Heart left ventricle (tissue), 16 donors: ENCODE measurements at regions of chr10 and their contacts with region 1.

Region 1: GRCh38 chr10:79068562-79069324 is at the start of gene ZMIZ1:
- DNase-seq: peak; percentile 91 to 94 (median 92)
- ATAC-seq: peak; percentile 27 to 54 (median 43)
- H3K4me3 ChIP-seq: peak within 1 kb of the TSS; percentile 76 to 99 (median 92)
- H3K27ac ChIP-seq: peak within 1 kb of the TSS; percentile 95 to 100 (median 98)
- H3K4me1 ChIP-seq: peaks cover 10 to 48% (median 41%) of the 10 kb centered on the region in 12 donors
- H3K27me3 ChIP-seq: no peaks in the 10 kb centered on the region
- CTCF ChIP-seq: peak in 6 of 12 donors; percentile 6 to 50 (median 36)
- POLR2A ChIP-seq: peak; percentile 37 to 90
- total RNA-seq, gene ZMIZ1: 39.8 to 75.4 (median 50.5) TPM

Region 2: DNA sequence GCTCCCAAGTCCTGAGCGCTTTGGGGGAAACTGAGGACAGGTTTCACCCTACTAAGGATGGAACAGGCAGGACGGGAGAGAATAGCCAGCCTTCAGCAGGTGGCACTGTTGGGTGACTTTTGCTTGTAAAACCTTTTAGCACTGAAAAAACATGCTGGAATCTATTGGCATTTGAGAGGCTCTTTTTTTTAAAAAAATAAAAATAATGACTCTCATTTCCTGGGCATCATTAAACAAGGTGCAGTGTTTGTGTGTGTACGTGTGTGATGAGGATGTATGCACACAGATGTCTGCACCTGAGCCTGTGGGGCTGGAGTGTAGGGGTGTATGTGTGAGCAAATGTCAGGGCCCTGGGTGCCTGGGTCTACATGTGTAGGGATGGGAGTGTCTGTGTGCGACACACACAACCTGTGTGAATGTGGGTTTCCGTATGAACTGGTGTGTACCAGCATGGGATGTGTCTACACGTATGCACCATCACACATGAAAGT is 857.1 kb before region 1 on chr10:
- intact Hi-C with region 1: loop called in 4 of 10 experiments (anchors 5 to 10 kb)
- DNase-seq: peak in 1 of 5 donors; percentile 47
- ATAC-seq: peak in 3 of 4 donors; percentile 5 to 18 (median 9)
- H3K4me3 ChIP-seq: no peak overlapping the region
- H3K27ac ChIP-seq: peak overlapping the region in 5 of 12 donors; percentile 19 to 62 (median 52)
- H3K4me1 ChIP-seq: peaks cover 0 to 38% (median 19%) of the 10 kb centered on the region in 12 donors
- H3K27me3 ChIP-seq: no peaks in the 10 kb centered on the region
- CTCF ChIP-seq: peak in 11 of 12 donors; percentile 21 to 69 (median 55)
- POLR2A ChIP-seq: no peak

Region 3: DNA sequence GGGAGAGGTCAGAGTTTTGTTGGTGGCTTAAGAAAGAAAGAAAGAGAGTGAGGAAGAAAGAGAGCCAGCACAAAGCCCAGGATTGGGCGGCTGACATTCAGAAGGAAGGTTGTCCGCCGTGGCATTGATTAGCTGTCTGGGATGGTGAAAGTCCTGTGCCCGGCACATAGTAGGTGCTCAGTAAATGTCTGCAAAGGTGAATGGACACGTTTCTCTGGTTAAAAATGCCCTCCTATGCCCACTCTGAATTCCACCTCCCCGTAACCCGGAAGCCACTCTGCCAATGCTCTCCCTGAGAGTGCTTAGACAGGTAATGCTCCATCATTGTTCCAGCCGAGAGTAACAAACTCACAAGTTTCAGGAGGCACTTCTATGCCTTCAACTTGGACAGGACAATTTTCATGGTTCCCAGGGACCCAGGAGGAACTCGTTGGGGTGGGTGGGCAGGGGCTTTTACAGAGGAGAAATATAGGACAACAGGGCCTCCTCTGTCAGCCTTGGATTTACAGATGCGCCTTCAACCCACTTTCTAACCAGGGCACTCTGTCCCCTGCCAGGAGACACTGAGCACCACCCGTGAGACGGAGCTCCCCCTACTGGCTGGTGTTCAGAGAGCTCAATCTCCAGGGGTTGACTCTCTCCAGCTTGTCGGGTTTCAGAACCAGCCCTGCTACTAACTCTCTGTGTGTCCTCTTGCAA is 411.4 kb before region 1 on chr10:
- intact Hi-C with region 1: loop called in 1 of 10 experiments (anchors 10 kb)
- DNase-seq: peak; percentile 72 to 84 (median 76)
- ATAC-seq: peak; percentile 81 to 94 (median 92)
- H3K4me3 ChIP-seq: no peak overlapping the region
- H3K27ac ChIP-seq: peak overlapping the region in 1 of 12 donors; percentile 45
- H3K4me1 ChIP-seq: peaks cover 0 to 5% (median 0%) of the 10 kb centered on the region in 12 donors
- H3K27me3 ChIP-seq: no peaks in the 10 kb centered on the region
- CTCF ChIP-seq: peak; percentile 55 to 77 (median 66)
- POLR2A ChIP-seq: no peak

Region 4: DNA sequence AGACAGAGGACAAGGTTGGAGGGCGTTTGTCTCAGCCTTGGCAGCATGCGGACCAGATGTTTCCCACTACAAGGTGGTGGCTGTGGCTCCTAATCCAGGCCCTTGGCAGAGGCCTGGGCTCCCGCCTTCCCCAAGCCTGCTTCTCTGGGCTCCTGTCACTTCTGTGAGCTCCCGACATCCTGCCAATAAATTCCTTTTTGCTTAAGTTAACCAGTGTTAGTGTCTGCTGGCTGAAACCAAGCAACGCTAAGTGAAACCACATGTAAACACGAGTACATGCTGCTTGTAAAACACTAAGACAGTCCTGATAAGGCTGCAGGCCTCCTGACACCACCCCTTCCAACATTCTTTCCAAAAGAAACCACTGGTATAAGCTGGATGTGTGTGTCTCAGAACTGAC is 263.6 kb before region 1 on chr10:
- intact Hi-C with region 1: loop called in 3 of 10 experiments (anchors 2 to 10 kb)
- DNase-seq: peak; percentile 67 to 88 (median 82)
- ATAC-seq: peak; percentile 90 to 93 (median 92)
- H3K4me3 ChIP-seq: no peak overlapping the region
- H3K27ac ChIP-seq: peak overlapping the region; percentile 57 to 87 (median 79)
- H3K4me1 ChIP-seq: peaks cover 0 to 68% (median 43%) of the 10 kb centered on the region in 12 donors
- H3K27me3 ChIP-seq: no peaks in the 10 kb centered on the region
- CTCF ChIP-seq: no peak
- POLR2A ChIP-seq: no peak

Region 5: GRCh38 chr10:78991187-78991586 is 77.6 kb before region 1 on chr10:
- intact Hi-C with region 1: no loop called
- DNase-seq: no peak
- ATAC-seq: no peak
- H3K4me3 ChIP-seq: no peak overlapping the region
- H3K27ac ChIP-seq: no peak overlapping the region
- H3K4me1 ChIP-seq: no peaks in the 10 kb centered on the region
- H3K27me3 ChIP-seq: no peaks in the 10 kb centered on the region
- CTCF ChIP-seq: no peak
- POLR2A ChIP-seq: no peak

Region 6: GRCh38 chr10:79105150-79105739 is 36.5 kb after region 1 on chr10:
- intact Hi-C with region 1: loop called in 3 of 10 experiments (anchors 5 kb)
- DNase-seq: no peak
- ATAC-seq: no peak
- H3K4me3 ChIP-seq: no peak overlapping the region
- H3K27ac ChIP-seq: peak overlapping the region in 8 of 12 donors; percentile 2 to 94 (median 51)
- H3K4me1 ChIP-seq: peaks cover 33 to 99% (median 83%) of the 10 kb centered on the region in 12 donors
- H3K27me3 ChIP-seq: no peaks in the 10 kb centered on the region
- CTCF ChIP-seq: peak in 3 of 12 donors; percentile 10 to 31 (median 13)
- POLR2A ChIP-seq: no peak

Region 7: GRCh38 chr10:79149662-79150443 is 81.1 kb after region 1 on chr10:
- intact Hi-C with region 1: loop called in 5 of 10 experiments (anchors 2 to 5 kb)
- DNase-seq: peak; percentile 87 to 95 (median 92)
- ATAC-seq: peak; percentile 38 to 68 (median 64)
- H3K4me3 ChIP-seq: peak overlapping the region in 2 of 12 donors; percentile 1 to 4
- H3K27ac ChIP-seq: peak overlapping the region; percentile 88 to 98 (median 94)
- H3K4me1 ChIP-seq: peaks cover 69 to 100% (median 100%) of the 10 kb centered on the region in 12 donors
- H3K27me3 ChIP-seq: no peaks in the 10 kb centered on the region
- CTCF ChIP-seq: peak in 2 of 12 donors; percentile 7 to 14
- POLR2A ChIP-seq: peak in 1 of 2 donors; percentile 18